Head of caudate nucleus (tissue), 42 donors: ENCODE measurements at regions of chr9 and their contacts with region 1.

Region 1: DNA sequence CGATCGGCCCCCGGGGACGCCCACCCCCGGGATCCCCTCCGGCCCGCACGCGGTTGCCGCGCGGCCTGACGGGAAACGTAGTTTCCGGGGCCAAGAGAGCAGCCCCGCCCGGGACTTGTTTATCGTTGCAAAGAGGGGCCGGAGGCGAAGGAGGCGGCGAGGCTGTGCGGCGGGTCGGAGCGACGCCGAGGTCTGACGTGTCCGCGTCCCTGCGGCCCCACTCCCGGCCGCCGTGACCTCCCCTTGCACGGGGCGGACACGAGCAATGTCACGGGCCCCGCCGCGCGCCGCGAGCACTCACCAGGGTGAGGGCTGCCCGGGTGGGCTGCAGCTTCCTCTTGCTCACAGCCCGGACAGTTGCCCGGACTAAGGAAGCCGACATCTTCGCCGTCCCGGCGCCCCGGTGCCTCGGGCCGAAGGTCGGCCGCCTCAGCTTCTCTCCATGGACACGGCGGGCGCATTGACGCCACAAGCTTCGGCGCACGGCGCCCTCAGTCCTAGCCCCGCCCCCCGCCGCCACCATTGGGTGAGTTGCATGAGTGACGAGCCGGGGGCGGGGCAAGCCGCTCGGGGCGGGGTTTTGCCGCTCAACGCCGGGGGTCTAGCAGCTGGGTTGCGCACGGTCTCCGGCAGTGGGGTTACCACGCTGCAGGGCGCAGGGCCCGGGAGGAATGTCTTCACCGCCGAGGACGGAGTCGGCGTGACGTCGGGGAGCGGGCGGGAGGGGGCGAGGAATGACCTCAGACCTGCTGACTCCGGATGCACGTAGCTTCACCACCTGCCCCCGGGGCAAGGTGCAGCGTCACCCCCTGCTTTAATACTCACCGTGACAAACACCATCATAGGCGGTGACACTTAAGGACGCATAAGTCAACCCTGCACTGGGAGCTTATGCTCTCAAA is at the start of gene ISCA1:
- DNase-seq: peak; percentile 94 to 99 (median 98)

Region 2: GRCh38 chr9:85940832-85941621 is 341.3 kb before region 1 on chr9 and contains the start of gene NAA35:
- intact Hi-C with region 1: loop called (anchors 5 kb)
- DNase-seq: peak; percentile 96 to 99 (median 98)

Region 3: GRCh38 chr9:86354011-86354817 is 71.9 kb after region 1 on chr9 and contains the start of gene TUT7:
- intact Hi-C with region 1: loop called (anchors 10 kb)
- DNase-seq: peak; percentile 89 to 98 (median 96)